CD4-positive, alpha-beta T cell (primary cell): ENCODE measurements at regions of chrX and their contacts with region 1.

Region 1: GRCh38 chrX:47193475-47194193 is at the start of gene UBA1:
- DNase-seq: peak; percentile 83 to 99 (median 92)
- ATAC-seq: peak; percentile 79
- H3K4me3 ChIP-seq: peak within 1 kb of the TSS; percentile 78
- H3K4me3 Mint-ChIP-seq: peak within 1 kb of the TSS; percentile 99
- H3K27ac ChIP-seq: peak within 1 kb of the TSS; percentile 83 to 88
- H3K27ac Mint-ChIP-seq: peak within 1 kb of the TSS; percentile 92
- H3K4me1 ChIP-seq: peaks cover 70% of the 10 kb centered on the region
- H3K4me1 Mint-ChIP-seq: peaks cover 71% of the 10 kb centered on the region
- H3K27me3 ChIP-seq: no peaks in the 10 kb centered on the region
- H3K27me3 Mint-ChIP-seq: no peaks in the 10 kb centered on the region
- CTCF ChIP-seq: peak; percentile 57
- total RNA-seq, gene UBA1: 70.0 to 72.1 TPM

Region 2: GRCh38 chrX:47138171-47138570 is 55.5 kb before region 1 on chrX:
- CTCF ChIA-PET with region 1: no interaction called
- POLR2A ChIA-PET with region 1: no interaction called
- intact Hi-C with region 1: no loop called
- DNase-seq: no peak
- ATAC-seq: no peak
- H3K4me3 ChIP-seq: no peak overlapping the region
- H3K4me3 Mint-ChIP-seq: no peak overlapping the region
- H3K27ac ChIP-seq: no peak overlapping the region
- H3K27ac Mint-ChIP-seq: no peak overlapping the region
- H3K4me1 ChIP-seq: peaks cover 1% of the 10 kb centered on the region
- H3K4me1 Mint-ChIP-seq: peaks cover 12% of the 10 kb centered on the region
- H3K27me3 ChIP-seq: no peaks in the 10 kb centered on the region
- H3K27me3 Mint-ChIP-seq: no peaks in the 10 kb centered on the region
- CTCF ChIP-seq: no peak

Region 3: GRCh38 chrX:47158131-47158530 is 35.5 kb before region 1 on chrX:
- CTCF ChIA-PET with region 1: no interaction called
- POLR2A ChIA-PET with region 1: no interaction called
- intact Hi-C with region 1: no loop called
- DNase-seq: peak in 1 of 14 experiments; percentile 10
- ATAC-seq: no peak
- H3K4me3 ChIP-seq: no peak overlapping the region
- H3K4me3 Mint-ChIP-seq: no peak overlapping the region
- H3K27ac ChIP-seq: no peak overlapping the region
- H3K27ac Mint-ChIP-seq: no peak overlapping the region
- H3K4me1 ChIP-seq: no peaks in the 10 kb centered on the region
- H3K4me1 Mint-ChIP-seq: peaks cover 4% of the 10 kb centered on the region
- H3K27me3 ChIP-seq: no peaks in the 10 kb centered on the region
- H3K27me3 Mint-ChIP-seq: no peaks in the 10 kb centered on the region
- CTCF ChIP-seq: no peak

Region 4: GRCh38 chrX:47217642-47218279 is 24.1 kb after region 1 on chrX:
- CTCF ChIA-PET with region 1: no interaction called
- POLR2A ChIA-PET with region 1: interaction called, 22 read pairs
- intact Hi-C with region 1: loop called in 1 of 2 experiments (anchors 2 kb)
- DNase-seq: peak; percentile 89 to 99 (median 96)
- ATAC-seq: peak; percentile 81
- H3K4me3 ChIP-seq: peak overlapping the region; percentile 81
- H3K4me3 Mint-ChIP-seq: peak overlapping the region; percentile 98
- H3K27ac ChIP-seq: peak overlapping the region; percentile 89 to 99
- H3K27ac Mint-ChIP-seq: peak overlapping the region; percentile 98
- H3K4me1 ChIP-seq: peaks cover 30% of the 10 kb centered on the region
- H3K4me1 Mint-ChIP-seq: peaks cover 38% of the 10 kb centered on the region
- H3K27me3 ChIP-seq: no peaks in the 10 kb centered on the region
- H3K27me3 Mint-ChIP-seq: no peaks in the 10 kb centered on the region
- CTCF ChIP-seq: no peak

Region 5: GRCh38 chrX:47311932-47312774 is 118.5 kb after region 1 on chrX:
- CTCF ChIA-PET with region 1: interaction called, 3 read pairs
- POLR2A ChIA-PET with region 1: no interaction called
- intact Hi-C with region 1: loop called (anchors 1 to 5 kb)
- DNase-seq: peak; percentile 12 to 75 (median 31)
- ATAC-seq: peak; percentile 75
- H3K4me3 ChIP-seq: no peak overlapping the region
- H3K4me3 Mint-ChIP-seq: no peak overlapping the region
- H3K27ac ChIP-seq: no peak overlapping the region
- H3K27ac Mint-ChIP-seq: no peak overlapping the region
- H3K4me1 ChIP-seq: peaks cover 3% of the 10 kb centered on the region
- H3K4me1 Mint-ChIP-seq: no peaks in the 10 kb centered on the region
- H3K27me3 ChIP-seq: no peaks in the 10 kb centered on the region
- H3K27me3 Mint-ChIP-seq: no peaks in the 10 kb centered on the region
- CTCF ChIP-seq: peak; percentile 46

Region 6: DNA sequence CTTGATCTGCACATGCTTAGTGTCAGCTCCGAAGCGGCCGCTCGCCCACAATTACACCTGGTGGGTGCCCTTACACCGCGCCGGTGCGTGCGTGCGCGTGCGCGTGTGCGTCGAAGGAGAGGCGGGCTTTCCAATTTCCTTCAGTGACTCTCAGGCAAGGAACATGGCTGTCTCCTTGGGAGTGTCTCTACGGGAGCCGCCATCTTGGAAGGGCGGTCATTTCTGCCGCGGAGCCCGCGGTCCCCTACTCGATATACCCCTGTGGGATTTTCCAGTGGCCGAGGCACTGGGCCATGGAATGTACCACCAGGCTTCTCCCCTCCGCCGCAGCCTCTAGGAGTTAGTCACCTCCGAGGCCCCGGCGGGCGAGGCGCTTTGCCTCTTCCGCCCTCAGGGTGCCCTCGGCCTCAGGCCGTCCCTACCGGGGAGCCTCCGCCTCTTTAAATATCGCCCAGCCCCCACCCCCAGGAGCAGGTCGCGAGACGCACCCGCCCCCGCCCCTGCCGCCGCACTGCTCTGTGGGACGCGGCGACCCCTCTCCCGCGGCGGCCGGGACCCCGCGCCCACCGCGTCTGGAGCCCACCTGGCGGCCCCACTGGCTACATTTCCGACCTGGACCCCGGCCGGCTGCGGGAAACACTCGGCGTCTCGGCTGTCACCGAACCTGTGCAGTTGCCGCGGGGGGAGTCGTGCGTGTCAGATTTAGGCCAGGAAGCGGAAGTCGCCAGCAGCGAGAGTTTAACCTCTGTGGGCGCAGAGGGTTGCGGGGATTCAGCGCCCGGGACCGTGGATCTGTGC is 289.1 kb after region 1 on chrX and contains the start of gene ZNF41:
- CTCF ChIA-PET with region 1: no interaction called
- POLR2A ChIA-PET with region 1: interaction called, 8 read pairs
- intact Hi-C with region 1: loop called in 1 of 2 experiments (anchors 10 kb)
- DNase-seq: peak; percentile 52 to 93 (median 74)
- ATAC-seq: peak; percentile 81
- H3K4me3 ChIP-seq: peak within 1 kb of the TSS; percentile 88
- H3K4me3 Mint-ChIP-seq: peak within 1 kb of the TSS; percentile 96
- H3K27ac ChIP-seq: peak within 1 kb of the TSS; percentile 84
- H3K27ac Mint-ChIP-seq: peak within 1 kb of the TSS; percentile 94
- H3K4me1 ChIP-seq: peaks cover 21% of the 10 kb centered on the region
- H3K4me1 Mint-ChIP-seq: peaks cover 45% of the 10 kb centered on the region
- H3K27me3 ChIP-seq: no peaks in the 10 kb centered on the region
- H3K27me3 Mint-ChIP-seq: no peaks in the 10 kb centered on the region
- CTCF ChIP-seq: no peak
- total RNA-seq, gene ZNF41: 3.1 to 3.9 TPM

Region 7: GRCh38 chrX:47644557-47645091 is 451.0 kb after region 1 on chrX:
- CTCF ChIA-PET with region 1: no interaction called
- POLR2A ChIA-PET with region 1: interaction called, 3 read pairs
- intact Hi-C with region 1: loop called in 1 of 2 experiments (anchors 5 kb)
- DNase-seq: peak in 3 of 14 experiments; percentile 24 to 48 (median 37)
- ATAC-seq: peak; percentile 61
- H3K4me3 ChIP-seq: no peak overlapping the region
- H3K4me3 Mint-ChIP-seq: no peak overlapping the region
- H3K27ac ChIP-seq: no peak overlapping the region
- H3K27ac Mint-ChIP-seq: peak overlapping the region; percentile 49
- H3K4me1 ChIP-seq: peaks cover 25% of the 10 kb centered on the region
- H3K4me1 Mint-ChIP-seq: peaks cover 44% of the 10 kb centered on the region
- H3K27me3 ChIP-seq: no peaks in the 10 kb centered on the region
- H3K27me3 Mint-ChIP-seq: no peaks in the 10 kb centered on the region
- CTCF ChIP-seq: no peak